ENCODE measurements at regions of chr18 and their contacts with region 1.

Region 1: DNA sequence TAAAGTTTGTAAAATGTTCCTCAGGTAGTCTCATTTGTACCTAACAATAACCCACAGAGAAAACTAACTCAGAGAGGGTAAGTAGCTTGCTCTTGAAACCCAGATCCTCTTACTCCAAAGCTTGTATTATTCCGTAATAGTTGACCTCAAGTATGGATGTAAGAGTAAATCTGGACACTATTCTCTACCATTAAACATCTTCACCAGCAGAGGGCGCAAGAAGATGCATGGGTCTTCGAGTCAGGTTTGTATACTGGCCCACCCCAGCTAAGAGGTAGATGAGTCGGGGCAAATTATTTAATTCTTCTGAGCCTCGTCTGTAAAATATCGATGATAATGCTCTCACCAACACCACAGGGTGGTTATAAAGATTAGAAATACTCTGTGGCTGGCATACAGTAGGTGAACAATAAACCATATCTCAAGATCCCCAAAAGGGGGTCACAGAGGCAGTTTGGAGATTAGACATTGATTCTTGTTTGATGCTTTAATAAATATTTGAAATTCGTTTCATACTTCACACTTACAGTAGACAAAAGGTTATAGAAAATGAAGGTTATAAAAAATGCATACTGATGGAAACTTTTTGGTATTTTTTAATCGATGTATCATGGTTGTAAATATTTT is 3.5 kb upstream of the CABLES1 start:
- DNase-seq: peak; percentile 41
- H3K4me3 Mint-ChIP-seq: no peak overlapping the region
- H3K27ac Mint-ChIP-seq: no peak overlapping the region
- H3K4me1 Mint-ChIP-seq: peaks cover 19% of the 10 kb centered on the region
- H3K27me3 Mint-ChIP-seq: no peaks in the 10 kb centered on the region

Region 2: DNA sequence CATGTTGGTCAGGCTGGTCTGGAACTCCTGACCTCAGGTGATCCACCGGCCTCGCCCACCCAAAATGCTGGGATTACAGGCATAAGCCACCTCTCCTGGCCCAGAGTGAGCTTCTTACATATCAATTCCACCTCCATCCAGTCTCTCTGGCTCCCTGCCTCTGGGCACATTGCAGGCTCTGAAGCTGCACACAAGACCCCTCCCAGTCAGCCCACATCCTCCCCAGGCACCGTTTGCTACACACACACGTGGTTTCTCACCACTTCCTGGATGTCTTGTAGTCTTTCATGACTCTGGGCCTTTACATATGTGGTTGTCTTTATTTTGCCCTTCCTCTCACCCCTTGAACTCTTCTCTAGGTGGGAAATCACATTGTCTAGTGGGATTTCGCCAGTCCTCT is 60.5 kb before region 1 on chr18:
- intact Hi-C with region 1: loop called (anchors 10 kb)
- DNase-seq: peak; percentile 85
- H3K4me3 Mint-ChIP-seq: peak overlapping the region; percentile 27
- H3K27ac Mint-ChIP-seq: peak overlapping the region; percentile 95
- H3K4me1 Mint-ChIP-seq: peaks cover 55% of the 10 kb centered on the region
- H3K27me3 Mint-ChIP-seq: no peaks in the 10 kb centered on the region

Region 3: DNA sequence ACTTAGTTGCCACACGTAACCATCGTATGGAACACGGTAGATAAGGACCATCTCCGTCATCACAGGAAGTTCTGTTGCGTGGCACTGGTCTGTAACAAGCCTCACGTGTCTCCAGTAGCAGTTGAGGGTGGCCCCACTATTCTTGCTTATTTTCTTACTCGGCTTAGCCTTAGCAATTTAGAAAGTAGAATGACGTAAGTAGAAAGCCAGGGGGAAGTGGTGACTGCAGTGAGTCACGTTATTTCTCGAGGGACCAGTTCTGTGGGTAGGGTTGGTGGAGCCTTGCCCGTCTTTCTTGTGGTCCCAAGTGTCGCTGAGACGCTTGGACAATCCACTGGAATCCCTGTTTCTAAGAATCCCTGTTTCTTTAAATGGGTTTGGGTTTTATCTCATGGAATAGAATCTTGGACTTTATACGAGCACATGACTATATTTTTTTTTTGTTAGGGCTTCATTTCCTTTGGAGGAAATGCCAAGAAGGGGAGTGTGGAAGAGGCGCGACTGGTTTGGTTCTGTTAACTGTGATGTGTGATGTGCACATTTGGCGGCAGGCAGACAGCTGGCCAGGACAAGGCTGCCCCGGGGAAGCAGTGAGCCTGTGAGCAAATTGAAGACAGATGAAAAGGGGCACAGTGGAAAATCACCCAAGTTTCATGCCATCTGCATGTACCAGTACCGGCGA is 99.7 kb after region 1 on chr18:
- intact Hi-C with region 1: loop called (anchors 1 kb)
- DNase-seq: peak; percentile 83
- H3K4me3 Mint-ChIP-seq: peak overlapping the region; percentile 69
- H3K27ac Mint-ChIP-seq: peak overlapping the region; percentile 98
- H3K4me1 Mint-ChIP-seq: peaks cover 70% of the 10 kb centered on the region
- H3K27me3 Mint-ChIP-seq: no peaks in the 10 kb centered on the region

Region 4: GRCh38 chr18:23356915-23357601 is 225.3 kb after region 1 on chr18:
- intact Hi-C with region 1: loop called (anchors 1 kb)
- DNase-seq: no peak
- H3K4me3 Mint-ChIP-seq: no peak overlapping the region
- H3K27ac Mint-ChIP-seq: no peak overlapping the region
- H3K4me1 Mint-ChIP-seq: peaks cover 39% of the 10 kb centered on the region
- H3K27me3 Mint-ChIP-seq: no peaks in the 10 kb centered on the region

Region 5: DNA sequence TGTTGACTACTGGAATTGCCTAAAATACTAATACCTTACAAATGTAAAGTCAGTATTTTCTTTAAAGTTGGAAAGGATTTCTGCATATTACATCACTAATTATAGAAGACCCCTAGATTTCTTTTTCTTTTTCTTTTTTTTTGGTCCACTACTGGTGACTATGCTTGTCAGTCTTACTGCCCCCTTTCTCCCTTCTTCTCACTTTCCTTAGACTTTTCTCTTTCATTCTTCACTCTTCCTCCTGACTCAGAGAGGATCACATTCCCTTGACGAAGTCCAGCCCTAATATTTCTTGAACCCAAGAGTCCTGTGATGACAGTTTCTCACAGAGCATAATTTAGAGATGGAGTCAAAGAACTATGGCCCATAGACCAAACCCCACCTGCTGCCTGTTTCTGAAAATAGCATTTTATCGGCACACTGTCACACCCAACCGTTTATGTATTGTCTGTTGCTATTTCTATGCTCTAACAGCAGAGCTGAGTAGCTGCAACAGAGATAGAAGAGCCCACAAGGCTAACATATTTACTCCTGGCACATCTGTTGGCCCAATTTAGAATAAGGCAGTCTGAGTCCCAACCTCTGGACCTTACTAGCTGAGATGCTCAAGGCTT is 280.7 kb after region 1 on chr18:
- intact Hi-C with region 1: loop called (anchors 1 kb)
- DNase-seq: no peak
- H3K4me3 Mint-ChIP-seq: no peak overlapping the region
- H3K27ac Mint-ChIP-seq: no peak overlapping the region
- H3K4me1 Mint-ChIP-seq: no peaks in the 10 kb centered on the region
- H3K27me3 Mint-ChIP-seq: no peaks in the 10 kb centered on the region

Measured in activated T-helper 2 cell treated with anti-CD3 and anti-CD28 coated beads, Interferon-gamma antibody, Interleukin-2, Interleukin-4, amounts not matched to agents 10 μg/mL and 5 μg/mL and 100 μg/mL, durations not matched to agents 14 hours and 24 hours and 36 hours (primary cell).